Activated CD4-positive, alpha-beta T cell treated with anti-CD3 and anti-CD28 coated beads, Interleukin-2, amount 10 ng/mL, durations not matched to agents 24 days and 14 days (primary cell): ENCODE measurements at regions of chr6 and their contacts with region 1.

Region 1: GRCh38 chr6:68634726-68635411 is at the start of gene ADGRB3:
- DNase-seq: peak; percentile 79
- H3K4me3 Mint-ChIP-seq: peak within 1 kb of the TSS; percentile 85
- H3K27ac Mint-ChIP-seq: no peak within 1 kb of the TSS
- H3K4me1 Mint-ChIP-seq: peaks cover 14% of the 10 kb centered on the region
- H3K27me3 Mint-ChIP-seq: peaks cover 48% of the 10 kb centered on the region
- total RNA-seq, gene ADGRB3: not detected in 2 replicates

Region 2: DNA sequence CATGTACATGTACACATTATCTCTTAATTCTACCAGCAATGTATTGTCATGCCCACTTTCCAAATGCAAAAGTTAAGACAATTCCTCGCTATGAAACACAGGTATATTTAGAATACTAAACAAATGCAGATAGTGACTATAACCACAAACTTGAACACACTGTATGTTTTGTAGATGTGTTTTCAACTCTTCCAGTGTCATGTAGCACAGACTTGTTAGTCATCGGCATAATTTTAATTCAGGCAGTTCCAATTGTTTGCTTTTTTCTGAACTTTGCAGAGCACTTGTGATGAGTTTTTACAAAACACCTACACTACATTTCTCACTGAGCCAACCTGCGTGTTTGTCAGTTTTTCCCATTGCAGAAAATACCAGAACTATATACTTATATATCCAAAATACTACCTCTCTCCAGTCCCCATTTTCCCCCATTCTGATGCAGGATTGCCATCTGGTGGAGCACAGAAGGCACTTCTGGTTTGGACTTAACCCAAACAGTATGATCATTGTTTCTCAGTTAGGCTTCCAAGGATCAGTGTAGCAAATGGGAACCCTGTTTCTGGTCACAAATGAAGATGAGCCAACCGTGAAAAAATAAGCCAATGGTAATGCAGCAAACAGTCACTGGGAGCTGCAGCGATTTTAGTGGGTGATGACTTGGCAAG is 143.6 kb after region 1 on chr6:
- intact Hi-C with region 1: loop called (anchors 2 kb)
- DNase-seq: no peak
- H3K4me3 Mint-ChIP-seq: no peak overlapping the region
- H3K27ac Mint-ChIP-seq: no peak overlapping the region
- H3K4me1 Mint-ChIP-seq: no peaks in the 10 kb centered on the region
- H3K27me3 Mint-ChIP-seq: no peaks in the 10 kb centered on the region